Astrocyte of the cerebellum (primary cell): ENCODE measurements at regions of chr16 and their contacts with region 1.

Region 1: DNA sequence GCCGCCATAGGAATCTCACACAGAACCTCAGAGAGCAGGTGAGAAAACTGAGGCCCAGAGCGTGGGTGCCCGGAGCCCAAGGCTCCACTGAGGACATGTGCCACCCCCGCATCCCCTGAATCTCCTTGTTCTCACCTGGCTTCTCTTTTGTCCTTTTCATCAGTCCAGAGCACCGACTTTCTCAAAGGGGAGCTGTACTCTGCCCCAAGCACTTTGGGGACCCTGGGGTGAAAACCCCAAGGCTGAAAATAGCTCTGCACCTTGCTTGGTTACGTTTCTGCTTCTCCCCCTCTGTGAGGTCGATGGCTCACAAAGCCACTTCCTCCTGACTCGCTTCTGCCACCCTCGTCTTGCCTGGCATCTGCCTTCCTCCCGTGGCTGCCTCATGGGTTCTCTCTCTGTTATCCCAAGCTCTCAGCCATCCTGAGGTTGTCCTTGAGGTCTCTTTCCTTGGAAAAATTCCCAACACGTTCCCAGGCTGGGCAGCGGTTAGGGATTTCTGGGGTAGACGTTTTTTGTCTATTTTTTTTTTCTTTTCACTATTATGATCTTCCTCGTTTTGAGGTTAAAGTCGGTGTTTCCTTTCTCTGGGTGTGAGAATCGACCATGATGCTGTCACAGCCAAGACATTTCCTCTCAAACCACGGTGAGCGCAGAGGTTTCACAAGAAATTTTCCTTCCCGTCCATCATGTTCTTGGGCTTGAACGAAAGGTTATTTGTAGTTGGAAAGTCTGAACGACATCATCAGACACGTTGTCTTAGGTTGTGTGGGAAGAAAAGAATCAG is 37.2 kb downstream of the IRF8 start:
- DNase-seq: no peak
- H3K4me3 ChIP-seq: no peak overlapping the region
- CTCF ChIP-seq: no peak

Region 2: DNA sequence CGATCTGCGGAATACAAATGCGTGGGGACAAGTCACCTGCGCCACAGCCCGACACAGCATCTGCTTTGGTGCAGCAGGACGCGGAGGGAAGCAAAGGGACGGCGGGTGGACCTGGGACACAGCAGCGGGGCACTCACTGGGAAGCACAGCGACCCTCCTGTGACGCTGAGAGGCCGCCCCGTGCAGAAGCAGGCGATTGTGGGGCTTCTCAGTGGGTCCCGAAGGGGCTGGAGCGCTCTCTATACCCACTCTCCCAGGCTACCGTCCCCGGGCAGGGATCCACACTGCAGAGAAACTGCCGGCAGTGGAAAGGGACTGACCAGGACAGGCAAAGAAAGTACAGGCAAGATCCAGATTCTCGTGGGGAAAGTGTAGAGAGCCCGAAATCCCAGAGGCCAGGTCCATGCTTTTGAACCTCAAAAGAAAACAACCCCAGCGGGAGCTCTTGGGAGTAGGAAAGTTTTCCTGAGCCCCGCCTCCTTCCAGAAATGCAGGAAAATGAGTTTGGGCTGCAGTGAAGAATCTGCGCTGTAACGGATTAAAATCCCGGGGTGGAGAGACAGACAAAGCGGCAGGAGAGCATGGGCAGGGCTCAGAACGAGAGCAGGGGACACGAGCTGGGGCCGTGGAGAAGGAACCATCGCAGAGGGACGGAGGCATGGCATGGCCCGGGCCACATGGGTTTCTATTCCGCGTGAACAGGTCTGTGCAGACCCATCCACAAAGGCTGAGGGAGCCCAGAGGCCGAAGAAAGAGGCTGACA is 124.0 kb before region 1 on chr16:
- in situ Hi-C with region 1: no loop called
- DNase-seq: no peak
- H3K4me3 ChIP-seq: no peak overlapping the region
- CTCF ChIP-seq: no peak

Region 3: GRCh38 chr16:85838381-85838780 is 97.8 kb before region 1 on chr16:
- in situ Hi-C with region 1: no loop called
- DNase-seq: no peak
- H3K4me3 ChIP-seq: no peak overlapping the region
- CTCF ChIP-seq: no peak

Region 4: GRCh38 chr16:85853547-85854545 is 82.3 kb before region 1 on chr16:
- in situ Hi-C with region 1: loop called (anchors 10 kb)
- DNase-seq: no peak
- H3K4me3 ChIP-seq: no peak overlapping the region
- CTCF ChIP-seq: no peak